ENCODE measurements at regions of chr11 and their contacts with region 1.

Region 1: GRCh38 chr11:94767761-94768601 is at the start of gene AMOTL1:
- DNase-seq: peak; percentile 99
- H3K4me3 ChIP-seq: peak within 1 kb of the TSS; percentile 82
- H3K27ac ChIP-seq: peak within 1 kb of the TSS; percentile 82
- H3K4me1 ChIP-seq: peaks cover 14% of the 10 kb centered on the region
- H3K27me3 ChIP-seq: no peaks in the 10 kb centered on the region
- CTCF ChIP-seq: no peak
- total RNA-seq, gene AMOTL1: 67.8 and 68.5 TPM in 2 replicates

Region 2: DNA sequence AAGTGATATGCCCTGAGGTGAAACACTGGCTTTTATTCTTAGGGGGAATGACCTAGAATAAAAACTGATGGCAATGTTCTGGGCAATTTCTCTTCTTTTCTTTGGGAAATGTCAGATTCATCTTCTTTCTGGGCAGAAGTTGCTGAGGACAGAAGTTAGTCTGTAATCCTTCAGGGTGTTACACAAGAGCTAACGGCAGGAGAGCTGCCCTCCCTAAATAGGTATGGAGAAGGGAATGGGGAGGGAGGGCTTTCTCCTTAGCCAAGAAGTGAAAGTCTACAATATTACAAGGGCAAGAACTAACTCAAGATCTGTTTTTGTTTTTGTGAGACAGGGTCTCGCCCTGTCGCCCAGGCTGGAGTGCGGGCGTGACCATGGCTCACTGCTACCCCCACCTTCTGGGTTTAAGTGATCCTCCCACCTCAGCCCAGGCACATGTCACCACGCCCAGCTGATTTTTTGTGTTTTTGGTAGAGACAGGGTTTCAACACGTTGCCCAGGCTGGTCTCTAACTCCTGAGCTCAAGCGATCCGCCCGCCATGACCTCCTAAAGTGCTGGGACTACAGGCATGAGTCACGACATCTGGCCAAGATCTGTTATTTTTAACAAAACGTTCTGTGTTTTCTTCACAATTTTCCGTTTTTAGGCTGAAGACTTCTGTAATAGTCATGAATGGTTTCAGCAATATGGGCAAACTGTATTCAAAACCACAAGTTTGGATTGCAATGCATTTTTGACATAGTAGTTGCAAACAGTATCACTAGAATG is 193.6 kb before region 1 on chr11:
- CTCF ChIA-PET with region 1: no interaction called
- POLR2A ChIA-PET with region 1: no interaction called
- intact Hi-C with region 1: no loop called
- DNase-seq: no peak
- H3K4me3 ChIP-seq: no peak overlapping the region
- H3K27ac ChIP-seq: no peak overlapping the region
- H3K4me1 ChIP-seq: no peaks in the 10 kb centered on the region
- H3K27me3 ChIP-seq: no peaks in the 10 kb centered on the region
- CTCF ChIP-seq: no peak

Region 3: GRCh38 chr11:94785509-94785908 is 17.5 kb after region 1 on chr11:
- CTCF ChIA-PET with region 1: no interaction called
- POLR2A ChIA-PET with region 1: no interaction called
- intact Hi-C with region 1: loop called (anchors 2 kb)
- DNase-seq: peak; percentile 96
- H3K4me3 ChIP-seq: peak overlapping the region; percentile 2
- H3K27ac ChIP-seq: peak overlapping the region; percentile 6
- H3K4me1 ChIP-seq: peaks cover 62% of the 10 kb centered on the region
- H3K27me3 ChIP-seq: no peaks in the 10 kb centered on the region
- CTCF ChIP-seq: no peak

Region 4: GRCh38 chr11:94897330-94897768 is 129.4 kb after region 1 on chr11:
- CTCF ChIA-PET with region 1: no interaction called
- POLR2A ChIA-PET with region 1: no interaction called
- intact Hi-C with region 1: no loop called
- DNase-seq: peak; percentile 65
- H3K4me3 ChIP-seq: no peak overlapping the region
- H3K27ac ChIP-seq: no peak overlapping the region
- H3K4me1 ChIP-seq: no peaks in the 10 kb centered on the region
- H3K27me3 ChIP-seq: no peaks in the 10 kb centered on the region
- CTCF ChIP-seq: peak; percentile 97

Measured in A673 (cell line).